ENCODE measurements at regions of chr9 and their contacts with region 1.

Region 1: GRCh38 chr9:12719431-12719830 is 26.2 kb downstream of the TYRP1 start:
- DNase-seq: peak; percentile 39
- H3K4me3 ChIP-seq: no peak overlapping the region
- H3K27ac ChIP-seq: no peak overlapping the region
- H3K4me1 ChIP-seq: peaks cover 15% of the 10 kb centered on the region
- H3K27me3 ChIP-seq: no peaks in the 10 kb centered on the region
- CTCF ChIP-seq: peak; percentile 24
- POLR2A ChIP-seq: no peak

Region 2: GRCh38 chr9:12658531-12659209 is 60.8 kb before region 1 on chr9:
- CTCF ChIA-PET with region 1: no interaction called
- POLR2A ChIA-PET with region 1: no interaction called
- dilution Hi-C with region 1: no loop called
- intact Hi-C with region 1: no loop called
- DNase-seq: no peak
- H3K4me3 ChIP-seq: no peak overlapping the region
- H3K27ac ChIP-seq: no peak overlapping the region
- H3K4me1 ChIP-seq: no peaks in the 10 kb centered on the region
- H3K27me3 ChIP-seq: no peaks in the 10 kb centered on the region
- CTCF ChIP-seq: no peak
- POLR2A ChIP-seq: no peak

Region 3: GRCh38 chr9:12775679-12776512 is 56.5 kb after region 1 on chr9:
- CTCF ChIA-PET with region 1: interaction called, 29 read pairs
- POLR2A ChIA-PET with region 1: no interaction called
- dilution Hi-C with region 1: no loop called
- intact Hi-C with region 1: loop called (anchors 1 kb)
- DNase-seq: peak; percentile 83
- H3K4me3 ChIP-seq: peak overlapping the region; percentile 66 to 97 (median 94)
- H3K27ac ChIP-seq: peak overlapping the region; percentile 27
- H3K4me1 ChIP-seq: peaks cover 2% of the 10 kb centered on the region
- H3K27me3 ChIP-seq: no peaks in the 10 kb centered on the region
- CTCF ChIP-seq: peak; percentile 25 to 39
- POLR2A ChIP-seq: no peak

Region 4: DNA sequence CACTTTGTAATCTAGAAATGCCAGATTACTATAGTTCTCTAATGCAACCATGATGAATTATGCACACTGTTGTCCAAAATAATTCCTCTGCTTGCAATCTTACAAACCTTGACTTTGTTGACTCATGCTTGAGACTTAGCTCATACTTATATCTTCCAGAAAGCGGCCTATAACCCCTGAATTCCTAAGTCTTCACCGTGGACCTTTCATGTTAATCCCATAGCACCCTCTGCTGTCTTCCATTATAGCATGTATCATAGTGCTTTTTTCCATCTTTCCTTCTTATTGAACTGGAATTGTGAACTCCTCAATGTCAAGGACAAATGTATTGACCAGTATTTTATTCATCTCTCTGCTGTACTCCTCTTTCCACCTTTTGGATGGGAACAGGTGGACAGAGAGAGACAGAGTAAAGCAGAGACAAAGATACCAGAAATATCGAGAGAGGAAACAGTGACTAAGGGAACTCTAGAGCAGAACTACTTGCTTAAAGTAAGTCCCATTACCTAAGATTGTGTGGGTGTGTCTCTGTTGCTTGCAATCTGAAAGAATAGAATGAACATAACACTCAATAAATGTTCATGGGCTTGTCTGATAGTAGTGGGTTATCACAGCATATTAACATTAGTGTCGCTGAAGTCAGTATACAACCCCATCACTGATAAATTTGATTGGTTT is 165.4 kb after region 1 on chr9:
- CTCF ChIA-PET with region 1: interaction called, 155 read pairs
- POLR2A ChIA-PET with region 1: no interaction called
- dilution Hi-C with region 1: no loop called
- intact Hi-C with region 1: loop called (anchors 1 kb)
- DNase-seq: peak; percentile 64
- H3K4me3 ChIP-seq: no peak overlapping the region
- H3K27ac ChIP-seq: no peak overlapping the region
- H3K4me1 ChIP-seq: no peaks in the 10 kb centered on the region
- H3K27me3 ChIP-seq: no peaks in the 10 kb centered on the region
- CTCF ChIP-seq: peak; percentile 22 to 32
- POLR2A ChIP-seq: no peak

Region 5: GRCh38 chr9:13088720-13089427 is 369.4 kb after region 1 on chr9:
- CTCF ChIA-PET with region 1: interaction called, 22 read pairs
- POLR2A ChIA-PET with region 1: no interaction called
- dilution Hi-C with region 1: no loop called
- intact Hi-C with region 1: loop called (anchors 1 kb)
- DNase-seq: peak; percentile 61
- H3K4me3 ChIP-seq: peak overlapping the region in 1 of 3 experiments; percentile 35
- H3K27ac ChIP-seq: no peak overlapping the region
- H3K4me1 ChIP-seq: peaks cover 9% of the 10 kb centered on the region
- H3K27me3 ChIP-seq: no peaks in the 10 kb centered on the region
- CTCF ChIP-seq: peak; percentile 36 to 66
- POLR2A ChIP-seq: no peak

Region 6: GRCh38 chr9:13410566-13411031 is 691.2 kb after region 1 on chr9:
- CTCF ChIA-PET with region 1: no interaction called
- POLR2A ChIA-PET with region 1: no interaction called
- dilution Hi-C with region 1: no loop called
- intact Hi-C with region 1: loop called (anchors 10 kb)
- DNase-seq: peak; percentile 80
- H3K4me3 ChIP-seq: no peak overlapping the region
- H3K27ac ChIP-seq: no peak overlapping the region
- H3K4me1 ChIP-seq: no peaks in the 10 kb centered on the region
- H3K27me3 ChIP-seq: peaks cover 7 to 14% of the 10 kb centered on the region in 2 experiments
- CTCF ChIP-seq: no peak
- POLR2A ChIP-seq: no peak